H1 (cell line): ENCODE measurements at regions of chr1 and their contacts with region 1.

Region 1: GRCh38 chr1:16017461-16018303 is at the start of gene HSPB7:
- DNase-seq: no peak
- H3K4me3 ChIP-seq: no peak within 1 kb of the TSS
- H3K27ac ChIP-seq: no peak within 1 kb of the TSS
- H3K4me1 ChIP-seq: peaks cover 5 to 34% (median 14%) of the 10 kb centered on the region in 4 experiments
- H3K27me3 ChIP-seq: peaks cover 0 to 4% (median under 1%) of the 10 kb centered on the region in 4 experiments; a peak in 3 of 7 replicates
- CTCF ChIP-seq: peak in 2 of 3 experiments; percentile 36 to 37; a peak in 3 of 4 replicates
- EP300 ChIP-seq: no peak
- POLR2A ChIP-seq: no peak
- RAD21 ChIP-seq: peak in 1 of 2 experiments; percentile 19; a peak in 2 of 4 replicates
- total RNA-seq, gene HSPB7: not detected in 2 replicates

Region 2: GRCh38 chr1:16032388-16033103 is 14.9 kb after region 1 on chr1:
- CTCF ChIA-PET with region 1: interaction called, 41 read pairs
- POLR2A ChIA-PET with region 1: interaction called, 8 read pairs
- DNase-seq: peak; percentile 85 to 95
- H3K4me3 ChIP-seq: no peak overlapping the region
- H3K27ac ChIP-seq: no peak overlapping the region
- H3K4me1 ChIP-seq: peaks cover 0 to 14% (median 4%) of the 10 kb centered on the region in 4 experiments; a peak in 6 of 7 replicates
- H3K27me3 ChIP-seq: no peaks in the 10 kb centered on the region; a peak in 2 of 7 replicates
- CTCF ChIP-seq: peak; percentile 86 to 97 (median 90)
- EP300 ChIP-seq: no peak
- POLR2A ChIP-seq: no peak
- RAD21 ChIP-seq: peak; percentile 90 to 91

Region 3: DNA sequence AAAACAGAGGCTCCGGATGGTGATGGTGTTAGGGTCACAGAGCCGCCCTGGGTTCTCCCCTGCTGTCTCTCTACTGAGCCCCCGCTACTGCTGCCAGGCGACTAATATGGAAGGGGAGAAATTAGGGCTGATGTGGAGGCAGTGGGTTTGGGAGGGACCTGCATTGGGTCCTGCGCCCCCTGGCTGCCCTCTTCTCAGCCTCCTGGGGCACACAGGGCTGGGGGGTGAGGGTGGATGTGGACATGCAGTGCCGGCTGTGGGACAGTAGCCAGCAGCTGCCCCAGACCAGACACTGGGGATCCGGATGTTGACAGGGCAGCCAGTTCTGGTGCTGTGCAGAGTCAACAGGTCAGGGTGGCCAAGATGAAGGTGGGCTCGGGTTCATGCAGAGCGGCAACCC is 24.4 kb after region 1 on chr1:
- CTCF ChIA-PET with region 1: interaction called, 13 read pairs
- POLR2A ChIA-PET with region 1: interaction called, 3 read pairs
- DNase-seq: no peak
- H3K4me3 ChIP-seq: no peak overlapping the region
- H3K27ac ChIP-seq: no peak overlapping the region
- H3K4me1 ChIP-seq: no peaks in the 10 kb centered on the region
- H3K27me3 ChIP-seq: no peaks in the 10 kb centered on the region
- CTCF ChIP-seq: peak; percentile 17 to 28 (median 27); a peak in 3 of 4 replicates
- EP300 ChIP-seq: no peak
- POLR2A ChIP-seq: no peak
- RAD21 ChIP-seq: 0 out of 4 replicates have a peak, but pooled peaks of 1 of the 2 experiments have one; percentile 3

Region 4: GRCh38 chr1:16155532-16156410 is 138.1 kb after region 1 on chr1 and contains the start of gene EPHA2:
- CTCF ChIA-PET with region 1: no interaction called
- POLR2A ChIA-PET with region 1: no interaction called
- DNase-seq: peak; percentile 75 to 96
- H3K4me3 ChIP-seq: peak within 1 kb of the TSS; percentile 70 to 87 (median 81)
- H3K27ac ChIP-seq: peak within 1 kb of the TSS; percentile 53; the same call in 1 of the 2 replicates
- H3K4me1 ChIP-seq: peaks cover 5 to 41% (median 30%) of the 10 kb centered on the region in 4 experiments
- H3K27me3 ChIP-seq: peaks cover 0 to 10% (median 6%) of the 10 kb centered on the region in 4 experiments; a peak in 4 of 7 replicates
- CTCF ChIP-seq: no peak
- EP300 ChIP-seq: peak in 1 of 2 experiments; percentile 68; a peak in 1 of 3 replicates
- POLR2A ChIP-seq: peak in 1 of 2 experiments; percentile 95; a peak in 2 of 3 replicates
- RAD21 ChIP-seq: 0 out of 4 replicates have a peak, but pooled peaks of 1 of the 2 experiments have one; percentile 1
- total RNA-seq, gene EPHA2: 28.4 and 33.6 TPM in 2 replicates